Activated CD4-positive, alpha-beta memory T cell treated with anti-CD3 and anti-CD28 coated beads, Interleukin-2, amount 10 ng/mL, durations not matched to agents 7 days and 5 days (primary cell): ENCODE measurements at regions of chr1 and their contacts with region 1.

Region 1: DNA sequence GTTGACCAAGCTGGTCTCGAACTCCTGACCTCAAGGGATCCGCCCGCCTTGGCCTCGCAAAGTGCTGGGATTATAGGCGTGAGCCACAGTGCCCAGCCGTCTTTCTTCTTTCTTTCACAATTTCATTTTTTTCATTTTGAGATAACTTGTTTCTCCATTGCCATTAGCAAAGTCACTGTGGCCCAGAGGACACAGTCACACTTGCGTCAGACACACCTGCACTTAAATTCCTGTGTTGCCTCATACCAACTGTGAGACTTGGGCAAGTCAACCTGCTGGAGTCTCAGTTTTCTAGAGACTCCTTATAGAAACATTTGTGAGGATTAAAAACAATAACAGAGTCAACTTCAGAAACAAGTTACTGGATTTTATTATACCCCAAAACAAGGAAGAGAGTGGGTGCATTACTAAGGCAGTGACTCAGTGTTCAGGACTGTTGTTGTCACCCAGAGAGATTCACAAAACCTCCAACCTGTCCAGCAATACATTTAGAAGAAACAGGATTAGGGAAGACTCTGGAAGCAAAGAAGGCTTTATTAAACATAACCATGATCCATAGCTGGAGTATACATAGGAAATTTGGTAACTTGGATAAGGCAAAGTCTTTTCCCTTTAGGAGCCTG is 2.6 kb downstream of the TEDDM1 start:
- DNase-seq: no peak
- H3K4me3 Mint-ChIP-seq: no peak overlapping the region
- H3K27ac Mint-ChIP-seq: no peak overlapping the region
- H3K4me1 Mint-ChIP-seq: peaks cover 7% of the 10 kb centered on the region
- H3K27me3 Mint-ChIP-seq: peaks cover 17% of the 10 kb centered on the region

Region 2: GRCh38 chr1:182110635-182111034 is 287.2 kb before region 1 on chr1:
- CTCF ChIA-PET with region 1: interaction called, 11 read pairs
- POLR2A ChIA-PET with region 1: no interaction called
- DNase-seq: no peak
- H3K4me3 Mint-ChIP-seq: no peak overlapping the region
- H3K27ac Mint-ChIP-seq: no peak overlapping the region
- H3K4me1 Mint-ChIP-seq: no peaks in the 10 kb centered on the region
- H3K27me3 Mint-ChIP-seq: peaks cover 35% of the 10 kb centered on the region

Region 3: GRCh38 chr1:182381962-182382819 is 15.7 kb before region 1 on chr1:
- CTCF ChIA-PET with region 1: interaction called, 12 read pairs
- POLR2A ChIA-PET with region 1: no interaction called
- DNase-seq: no peak
- H3K4me3 Mint-ChIP-seq: no peak overlapping the region
- H3K27ac Mint-ChIP-seq: no peak overlapping the region
- H3K4me1 Mint-ChIP-seq: no peaks in the 10 kb centered on the region
- H3K27me3 Mint-ChIP-seq: no peaks in the 10 kb centered on the region